ENCODE measurements at regions of chr17 and their contacts with region 1.

Region 1: GRCh38 chr17:64262417-64263260 is at the start of gene TEX2:
- DNase-seq: peak; percentile 76
- H3K4me3 Mint-ChIP-seq: peak within 1 kb of the TSS; percentile 90
- H3K27ac Mint-ChIP-seq: peak within 1 kb of the TSS; percentile 88
- H3K4me1 Mint-ChIP-seq: peaks cover 39% of the 10 kb centered on the region
- H3K27me3 Mint-ChIP-seq: no peaks in the 10 kb centered on the region
- total RNA-seq, gene TEX2: 9.2 to 10.6 TPM

Region 2: GRCh38 chr17:64020056-64020766 is 242.4 kb before region 1 on chr17 and contains the start of gene ICAM2:
- CTCF ChIA-PET with region 1: no interaction called
- intact Hi-C with region 1: loop called (anchors 1 kb)
- DNase-seq: peak; percentile 95
- H3K4me3 Mint-ChIP-seq: peak within 1 kb of the TSS; percentile 97
- H3K27ac Mint-ChIP-seq: peak within 1 kb of the TSS; percentile 98
- H3K4me1 Mint-ChIP-seq: peaks cover 62% of the 10 kb centered on the region
- H3K27me3 Mint-ChIP-seq: no peaks in the 10 kb centered on the region
- total RNA-seq, gene ICAM2: 41.6 to 41.9 TPM

Region 3: DNA sequence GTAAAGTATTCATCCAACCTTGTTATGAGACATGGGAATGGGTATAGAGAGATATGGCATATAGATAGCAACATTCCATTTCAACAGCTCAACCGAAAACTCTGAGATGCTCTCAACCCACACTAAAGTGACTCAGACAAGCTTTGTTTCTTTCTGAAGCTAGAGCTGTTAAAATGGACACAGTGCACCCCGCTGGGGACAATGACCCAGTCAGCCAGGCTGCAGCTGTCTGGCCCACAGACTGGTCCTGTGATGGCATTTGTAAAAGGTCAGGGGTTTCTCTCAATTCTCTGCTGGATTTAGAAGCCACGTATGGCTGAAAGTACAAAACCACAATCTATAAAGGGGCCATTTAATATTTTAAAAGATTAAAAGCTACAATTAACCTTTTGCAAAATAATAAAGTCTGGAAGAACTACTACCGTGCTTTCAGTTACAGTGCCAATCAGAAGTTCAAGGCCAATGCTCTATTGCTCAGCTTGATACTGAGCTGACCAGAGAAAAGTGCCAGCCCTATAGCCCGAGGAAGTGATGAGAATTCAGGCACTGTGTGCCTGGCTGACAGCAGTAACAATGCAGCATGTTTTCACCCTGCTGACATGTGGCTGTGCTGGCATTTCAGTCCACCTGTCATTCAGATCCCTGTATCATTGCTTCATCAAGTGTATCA is 59.8 kb before region 1 on chr17:
- CTCF ChIA-PET with region 1: interaction called, 3 read pairs
- intact Hi-C with region 1: loop called (anchors 5 kb)
- DNase-seq: no peak
- H3K4me3 Mint-ChIP-seq: no peak overlapping the region
- H3K27ac Mint-ChIP-seq: no peak overlapping the region
- H3K4me1 Mint-ChIP-seq: peaks cover 34% of the 10 kb centered on the region
- H3K27me3 Mint-ChIP-seq: no peaks in the 10 kb centered on the region

Region 4: GRCh38 chr17:64240741-64241347 is 21.8 kb before region 1 on chr17:
- CTCF ChIA-PET with region 1: no interaction called
- intact Hi-C with region 1: loop called (anchors 1 kb)
- DNase-seq: no peak
- H3K4me3 Mint-ChIP-seq: no peak overlapping the region
- H3K27ac Mint-ChIP-seq: peak overlapping the region; percentile 25
- H3K4me1 Mint-ChIP-seq: peaks cover 41% of the 10 kb centered on the region
- H3K27me3 Mint-ChIP-seq: no peaks in the 10 kb centered on the region

Region 5: DNA sequence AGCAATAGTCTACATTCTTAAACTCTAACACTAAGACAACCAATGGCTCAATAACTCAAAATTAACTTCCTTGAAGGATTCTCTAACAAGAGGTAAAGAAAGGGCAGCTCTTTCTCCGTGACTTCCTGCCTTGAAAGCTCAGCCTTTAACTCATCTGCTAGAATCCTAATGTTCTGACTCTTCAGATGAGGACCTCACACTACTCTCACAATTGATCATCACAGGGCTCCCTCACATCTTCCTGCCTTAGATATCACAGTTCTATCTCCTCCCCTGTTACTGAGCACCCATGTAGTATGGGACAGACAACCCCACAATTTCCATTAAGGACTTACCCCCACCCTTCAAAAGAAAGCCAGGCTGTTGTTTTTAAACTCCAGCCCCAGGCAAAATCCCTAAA is 366.0 kb after region 1 on chr17:
- CTCF ChIA-PET with region 1: no interaction called
- intact Hi-C with region 1: loop called (anchors 5 kb)
- DNase-seq: peak; percentile 61
- H3K4me3 Mint-ChIP-seq: peak overlapping the region; percentile 8
- H3K27ac Mint-ChIP-seq: no peak overlapping the region
- H3K4me1 Mint-ChIP-seq: peaks cover 52% of the 10 kb centered on the region
- H3K27me3 Mint-ChIP-seq: no peaks in the 10 kb centered on the region